ENCODE measurements at regions of chr4 and their contacts with region 1.

Region 1: GRCh38 chr4:95165926-95166524 is 382.7 kb downstream of the UNC5C start:
- DNase-seq: peak in 1 of 2 experiments; percentile 61
- H3K4me3 ChIP-seq: no peak overlapping the region
- H3K4me3 Mint-ChIP-seq: no peak overlapping the region
- H3K27ac Mint-ChIP-seq: no peak overlapping the region
- H3K4me1 ChIP-seq: no peaks in the 10 kb centered on the region
- H3K4me1 Mint-ChIP-seq: no peaks in the 10 kb centered on the region
- H3K27me3 ChIP-seq: no peaks in the 10 kb centered on the region
- H3K27me3 Mint-ChIP-seq: no peaks in the 10 kb centered on the region
- CTCF ChIP-seq: peak; percentile 32 to 67

Region 2: DNA sequence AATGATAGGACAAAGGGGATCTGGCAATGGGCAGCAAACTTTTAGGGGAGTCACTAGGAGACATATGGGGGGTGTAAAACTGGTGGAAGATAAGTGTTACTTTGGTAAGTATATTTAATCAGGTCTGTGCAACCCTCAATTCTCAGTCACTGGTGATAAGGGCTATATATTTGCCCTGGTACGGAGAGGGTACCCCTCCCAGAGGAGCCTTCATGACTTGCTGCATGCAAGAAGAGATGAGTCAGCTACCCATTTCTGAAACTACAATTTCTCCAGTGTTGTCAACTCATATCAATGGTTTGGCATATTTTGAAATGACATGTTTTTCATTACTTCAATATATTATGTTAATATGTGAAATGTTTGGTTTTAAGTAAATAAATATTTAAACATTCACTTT is 944.1 kb before region 1 on chr4:
- CTCF ChIA-PET with region 1: no interaction called
- POLR2A ChIA-PET with region 1: no interaction called
- intact Hi-C with region 1: no loop called
- DNase-seq: no peak
- H3K4me3 ChIP-seq: no peak overlapping the region
- H3K4me3 Mint-ChIP-seq: no peak overlapping the region
- H3K27ac Mint-ChIP-seq: no peak overlapping the region
- H3K4me1 ChIP-seq: no peaks in the 10 kb centered on the region
- H3K4me1 Mint-ChIP-seq: no peaks in the 10 kb centered on the region
- H3K27me3 ChIP-seq: no peaks in the 10 kb centered on the region
- H3K27me3 Mint-ChIP-seq: no peaks in the 10 kb centered on the region
- CTCF ChIP-seq: no peak

Region 3: GRCh38 chr4:95204873-95205272 is 38.8 kb after region 1 on chr4:
- CTCF ChIA-PET with region 1: interaction called, 3 read pairs
- POLR2A ChIA-PET with region 1: no interaction called
- intact Hi-C with region 1: loop called (anchors 1 kb)
- DNase-seq: peak in 1 of 2 experiments; percentile 26
- H3K4me3 ChIP-seq: no peak overlapping the region
- H3K4me3 Mint-ChIP-seq: no peak overlapping the region
- H3K27ac Mint-ChIP-seq: no peak overlapping the region
- H3K4me1 ChIP-seq: no peaks in the 10 kb centered on the region
- H3K4me1 Mint-ChIP-seq: no peaks in the 10 kb centered on the region
- H3K27me3 ChIP-seq: no peaks in the 10 kb centered on the region
- H3K27me3 Mint-ChIP-seq: no peaks in the 10 kb centered on the region
- CTCF ChIP-seq: peak; percentile 41 to 57

Region 4: GRCh38 chr4:95250544-95251137 is 84.6 kb after region 1 on chr4:
- CTCF ChIA-PET with region 1: no interaction called
- POLR2A ChIA-PET with region 1: no interaction called
- intact Hi-C with region 1: no loop called
- DNase-seq: no peak
- H3K4me3 ChIP-seq: no peak overlapping the region
- H3K4me3 Mint-ChIP-seq: no peak overlapping the region
- H3K27ac Mint-ChIP-seq: no peak overlapping the region
- H3K4me1 ChIP-seq: peaks cover 10% of the 10 kb centered on the region
- H3K4me1 Mint-ChIP-seq: no peaks in the 10 kb centered on the region
- H3K27me3 ChIP-seq: no peaks in the 10 kb centered on the region
- H3K27me3 Mint-ChIP-seq: no peaks in the 10 kb centered on the region
- CTCF ChIP-seq: no peak

Region 5: DNA sequence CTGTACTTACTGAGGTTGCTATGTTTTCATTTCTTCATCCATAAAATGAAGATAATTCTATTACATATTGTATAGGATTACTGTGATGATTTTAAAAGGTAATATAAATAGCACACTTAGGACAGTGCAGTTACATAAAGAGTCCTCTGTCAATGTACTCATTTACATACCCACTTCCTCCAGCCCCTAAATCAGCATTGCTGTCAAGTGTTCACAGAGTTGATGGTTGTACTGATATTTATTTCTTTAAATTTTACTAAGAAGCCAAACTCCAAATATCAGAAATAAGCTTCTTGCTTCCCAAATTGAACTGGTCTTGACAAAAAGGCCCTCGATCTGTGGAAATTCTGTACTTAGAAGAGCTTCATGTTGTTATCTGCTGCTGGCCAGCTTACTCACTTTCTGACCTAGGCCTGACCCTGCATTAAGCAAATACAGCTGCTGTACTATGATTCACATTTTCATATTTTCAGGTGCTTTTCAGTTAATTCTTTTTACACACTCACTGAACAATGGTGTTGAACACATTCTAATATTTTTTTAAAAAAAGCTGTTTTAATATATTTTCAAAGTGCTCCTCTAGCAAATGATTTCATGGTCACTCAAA is 123.1 kb after region 1 on chr4:
- CTCF ChIA-PET with region 1: no interaction called
- POLR2A ChIA-PET with region 1: no interaction called
- intact Hi-C with region 1: no loop called
- DNase-seq: no peak
- H3K4me3 ChIP-seq: no peak overlapping the region
- H3K4me3 Mint-ChIP-seq: no peak overlapping the region
- H3K27ac Mint-ChIP-seq: no peak overlapping the region
- H3K4me1 ChIP-seq: peaks cover 13% of the 10 kb centered on the region
- H3K4me1 Mint-ChIP-seq: no peaks in the 10 kb centered on the region
- H3K27me3 ChIP-seq: no peaks in the 10 kb centered on the region
- H3K27me3 Mint-ChIP-seq: no peaks in the 10 kb centered on the region
- CTCF ChIP-seq: no peak

Region 6: DNA sequence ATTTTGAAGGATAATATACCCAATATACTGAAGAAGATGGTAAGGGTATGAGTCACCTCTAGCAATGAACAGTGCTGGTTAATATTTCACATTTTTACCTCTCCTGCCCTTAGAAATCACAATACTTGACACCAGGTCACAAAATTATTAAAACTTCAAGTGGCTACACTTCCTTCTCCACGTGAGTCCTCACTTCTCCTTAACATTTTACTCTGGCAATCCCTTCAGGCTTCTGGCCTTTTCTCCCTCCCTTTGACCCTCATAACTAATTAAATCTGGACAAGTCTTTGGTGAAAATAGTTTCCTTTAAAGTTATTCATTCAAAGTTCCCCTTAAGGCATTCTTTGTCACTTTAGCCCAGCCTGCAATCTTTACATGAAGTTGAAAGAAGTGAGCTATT is 192.4 kb after region 1 on chr4:
- CTCF ChIA-PET with region 1: no interaction called
- POLR2A ChIA-PET with region 1: no interaction called
- intact Hi-C with region 1: loop called (anchors 5 kb)
- DNase-seq: peak; percentile 13 to 39
- H3K4me3 ChIP-seq: no peak overlapping the region
- H3K4me3 Mint-ChIP-seq: no peak overlapping the region
- H3K27ac Mint-ChIP-seq: no peak overlapping the region
- H3K4me1 ChIP-seq: peaks cover 41% of the 10 kb centered on the region
- H3K4me1 Mint-ChIP-seq: peaks cover 9% of the 10 kb centered on the region
- H3K27me3 ChIP-seq: no peaks in the 10 kb centered on the region
- H3K27me3 Mint-ChIP-seq: no peaks in the 10 kb centered on the region
- CTCF ChIP-seq: no peak

Region 7: DNA sequence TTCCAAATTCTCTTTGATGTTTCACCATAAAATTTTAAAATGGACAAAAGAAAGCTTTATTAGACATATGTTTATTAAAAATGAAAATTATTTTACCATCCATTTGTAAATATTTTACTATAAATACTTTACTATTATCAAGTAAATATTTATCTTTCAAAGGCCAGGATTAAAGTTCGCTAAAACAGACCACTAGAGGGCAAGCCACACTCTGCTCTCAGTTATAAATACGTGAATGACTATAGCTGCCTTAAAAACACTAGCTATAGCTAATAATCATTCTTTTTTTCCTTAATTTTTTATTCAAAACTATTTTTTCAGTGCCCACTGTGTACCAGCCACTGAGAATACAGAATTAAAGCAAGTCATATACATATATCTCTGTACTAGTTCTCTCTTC is 344.1 kb after region 1 on chr4:
- CTCF ChIA-PET with region 1: no interaction called
- POLR2A ChIA-PET with region 1: no interaction called
- intact Hi-C with region 1: loop called (anchors 2 kb)
- DNase-seq: no peak
- H3K4me3 ChIP-seq: no peak overlapping the region
- H3K4me3 Mint-ChIP-seq: no peak overlapping the region
- H3K27ac Mint-ChIP-seq: no peak overlapping the region
- H3K4me1 ChIP-seq: peaks cover 17% of the 10 kb centered on the region
- H3K4me1 Mint-ChIP-seq: peaks cover 7% of the 10 kb centered on the region
- H3K27me3 ChIP-seq: no peaks in the 10 kb centered on the region
- H3K27me3 Mint-ChIP-seq: no peaks in the 10 kb centered on the region
- CTCF ChIP-seq: peak; percentile 45 to 55

Region 8: GRCh38 chr4:95637043-95637600 is 471.1 kb after region 1 on chr4:
- CTCF ChIA-PET with region 1: no interaction called
- POLR2A ChIA-PET with region 1: no interaction called
- intact Hi-C with region 1: loop called (anchors 10 kb)
- DNase-seq: peak in 1 of 2 experiments; percentile 6
- H3K4me3 ChIP-seq: no peak overlapping the region
- H3K4me3 Mint-ChIP-seq: no peak overlapping the region
- H3K27ac Mint-ChIP-seq: no peak overlapping the region
- H3K4me1 ChIP-seq: peaks cover 7% of the 10 kb centered on the region; the same call in 1 of the 2 replicates
- H3K4me1 Mint-ChIP-seq: no peaks in the 10 kb centered on the region
- H3K27me3 ChIP-seq: no peaks in the 10 kb centered on the region
- H3K27me3 Mint-ChIP-seq: peaks cover 4% of the 10 kb centered on the region
- CTCF ChIP-seq: peak; percentile 10 to 18

Region 9: GRCh38 chr4:95835672-95836071 is 669.6 kb after region 1 on chr4:
- CTCF ChIA-PET with region 1: no interaction called
- POLR2A ChIA-PET with region 1: no interaction called
- intact Hi-C with region 1: loop called (anchors 10 kb)
- DNase-seq: peak in 1 of 2 experiments; percentile 14
- H3K4me3 ChIP-seq: no peak overlapping the region
- H3K4me3 Mint-ChIP-seq: no peak overlapping the region
- H3K27ac Mint-ChIP-seq: no peak overlapping the region
- H3K4me1 ChIP-seq: no peaks in the 10 kb centered on the region
- H3K4me1 Mint-ChIP-seq: no peaks in the 10 kb centered on the region
- H3K27me3 ChIP-seq: no peaks in the 10 kb centered on the region
- H3K27me3 Mint-ChIP-seq: no peaks in the 10 kb centered on the region
- CTCF ChIP-seq: peak; percentile 50 to 56

Region 10: DNA sequence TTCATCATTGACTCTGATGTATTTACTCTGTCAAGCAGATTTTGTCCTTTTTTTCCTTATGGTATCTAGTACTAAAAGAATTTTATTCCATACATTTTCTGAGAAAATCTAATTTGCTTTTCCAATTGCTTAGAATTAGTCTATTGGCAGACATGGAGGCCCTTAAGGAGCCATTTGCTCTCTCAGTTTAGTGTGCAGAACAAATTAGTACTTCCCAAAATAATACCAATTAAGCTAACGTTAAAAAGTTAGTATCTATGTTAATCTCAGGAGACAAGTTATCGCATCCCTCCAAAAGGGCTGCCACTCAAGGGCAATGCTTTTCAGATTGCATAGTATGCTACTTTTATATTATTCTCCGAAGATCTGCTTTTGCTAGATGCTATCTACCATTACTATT is 721.5 kb after region 1 on chr4:
- CTCF ChIA-PET with region 1: no interaction called
- POLR2A ChIA-PET with region 1: no interaction called
- intact Hi-C with region 1: no loop called
- DNase-seq: no peak
- H3K4me3 ChIP-seq: no peak overlapping the region
- H3K4me3 Mint-ChIP-seq: no peak overlapping the region
- H3K27ac Mint-ChIP-seq: no peak overlapping the region
- H3K4me1 ChIP-seq: no peaks in the 10 kb centered on the region
- H3K4me1 Mint-ChIP-seq: no peaks in the 10 kb centered on the region
- H3K27me3 ChIP-seq: no peaks in the 10 kb centered on the region
- H3K27me3 Mint-ChIP-seq: no peaks in the 10 kb centered on the region
- CTCF ChIP-seq: no peak

Measured in Caco-2 (cell line).